PC-3 (cell line): ENCODE measurements at regions of chr2 and their contacts with region 1.

Region 1: DNA sequence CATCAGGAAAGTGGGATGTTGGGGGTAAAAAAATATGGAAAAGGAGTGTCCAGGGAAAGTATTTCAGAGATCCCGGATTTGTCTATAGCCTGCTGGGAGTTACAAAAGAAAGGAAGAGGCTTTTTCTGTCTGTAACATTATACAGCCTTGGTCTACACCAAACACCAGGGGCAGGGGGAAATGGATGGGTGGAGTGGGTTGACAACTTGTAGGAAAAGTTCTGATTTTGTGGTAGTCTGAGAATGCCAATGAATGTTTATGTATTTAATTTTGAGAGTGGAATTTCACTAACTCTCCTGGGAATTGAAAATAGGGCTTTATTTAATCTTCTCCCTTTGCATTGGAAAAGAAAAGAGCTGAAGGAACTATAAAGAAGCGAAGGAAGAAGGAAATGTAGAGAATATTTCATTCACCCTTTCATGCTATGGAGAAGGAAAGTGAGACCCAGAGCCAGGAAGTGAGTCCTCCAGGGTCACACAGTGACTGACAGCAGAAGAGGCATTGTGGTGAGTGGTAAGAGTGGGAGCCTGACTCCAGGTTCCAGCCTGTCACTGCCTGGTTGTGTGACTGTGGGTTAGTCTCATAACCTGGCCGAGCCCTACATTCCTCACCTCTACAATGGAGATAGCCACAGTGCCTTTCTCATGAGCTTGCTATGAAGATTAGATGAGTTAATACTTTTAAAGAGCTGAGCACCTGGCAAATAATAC is 346.3 kb upstream of the TNP1 start:
- DNase-seq: peak; percentile 14
- ATAC-seq: no peak
- H3K4me3 ChIP-seq: no peak overlapping the region
- H3K27ac ChIP-seq: no peak overlapping the region
- H3K4me1 ChIP-seq: no peaks in the 10 kb centered on the region
- H3K27me3 ChIP-seq: no peaks in the 10 kb centered on the region
- CTCF ChIP-seq: no peak

Region 2: DNA sequence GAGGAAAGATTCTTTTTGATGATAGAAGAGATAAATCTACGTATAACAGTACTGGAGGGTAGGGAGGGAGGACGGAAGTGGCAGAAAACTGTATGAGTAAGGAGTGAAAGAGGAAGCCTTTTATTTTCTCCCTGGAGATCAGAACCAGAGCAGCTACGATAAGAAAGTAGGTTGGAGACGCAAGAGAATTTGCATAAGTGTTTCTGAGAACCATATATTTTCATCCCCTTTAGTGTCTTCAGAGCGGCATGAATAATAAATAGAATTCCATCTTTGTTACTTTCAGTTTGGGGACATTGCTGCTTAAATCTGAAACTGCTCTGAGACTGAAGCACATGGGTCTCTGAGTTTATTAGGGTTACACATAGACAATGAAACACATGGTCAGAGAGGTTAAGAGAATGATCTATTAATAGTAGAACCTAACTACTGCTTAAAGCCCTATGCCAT is 116.1 kb before region 1 on chr2:
- CTCF ChIA-PET with region 1: no interaction called
- POLR2A ChIA-PET with region 1: no interaction called
- intact Hi-C with region 1: no loop called
- DNase-seq: no peak
- ATAC-seq: peak; percentile 51
- H3K4me3 ChIP-seq: peak overlapping the region; percentile 24; the same call in 1 of the 2 replicates
- H3K27ac ChIP-seq: no peak overlapping the region
- H3K4me1 ChIP-seq: peaks cover 8% of the 10 kb centered on the region; the same call in 1 of the 2 replicates
- H3K27me3 ChIP-seq: no peaks in the 10 kb centered on the region
- CTCF ChIP-seq: no peak

Region 3: DNA sequence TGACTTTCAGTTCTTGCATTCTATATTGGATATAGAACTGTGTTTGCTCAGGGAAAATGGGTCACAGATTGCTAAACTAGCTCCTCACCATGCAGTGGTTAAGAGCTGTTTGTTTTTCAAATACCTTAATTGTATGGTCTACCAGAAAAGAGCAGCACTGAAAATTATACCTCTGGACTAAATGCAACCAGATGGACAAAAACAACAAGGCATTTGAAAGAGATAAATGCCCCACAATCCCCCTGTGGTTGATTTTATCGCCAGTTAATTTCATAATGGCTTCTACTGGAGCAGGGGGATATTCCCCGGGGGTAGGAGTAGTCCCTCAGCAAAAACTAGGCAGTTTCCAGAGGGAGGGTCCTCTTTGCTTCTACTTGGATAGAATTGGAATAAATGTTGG is 78.4 kb before region 1 on chr2:
- CTCF ChIA-PET with region 1: no interaction called
- POLR2A ChIA-PET with region 1: no interaction called
- intact Hi-C with region 1: no loop called
- DNase-seq: no peak
- ATAC-seq: no peak
- H3K4me3 ChIP-seq: no peak overlapping the region
- H3K27ac ChIP-seq: no peak overlapping the region
- H3K4me1 ChIP-seq: no peaks in the 10 kb centered on the region
- H3K27me3 ChIP-seq: no peaks in the 10 kb centered on the region
- CTCF ChIP-seq: no peak

Region 4: DNA sequence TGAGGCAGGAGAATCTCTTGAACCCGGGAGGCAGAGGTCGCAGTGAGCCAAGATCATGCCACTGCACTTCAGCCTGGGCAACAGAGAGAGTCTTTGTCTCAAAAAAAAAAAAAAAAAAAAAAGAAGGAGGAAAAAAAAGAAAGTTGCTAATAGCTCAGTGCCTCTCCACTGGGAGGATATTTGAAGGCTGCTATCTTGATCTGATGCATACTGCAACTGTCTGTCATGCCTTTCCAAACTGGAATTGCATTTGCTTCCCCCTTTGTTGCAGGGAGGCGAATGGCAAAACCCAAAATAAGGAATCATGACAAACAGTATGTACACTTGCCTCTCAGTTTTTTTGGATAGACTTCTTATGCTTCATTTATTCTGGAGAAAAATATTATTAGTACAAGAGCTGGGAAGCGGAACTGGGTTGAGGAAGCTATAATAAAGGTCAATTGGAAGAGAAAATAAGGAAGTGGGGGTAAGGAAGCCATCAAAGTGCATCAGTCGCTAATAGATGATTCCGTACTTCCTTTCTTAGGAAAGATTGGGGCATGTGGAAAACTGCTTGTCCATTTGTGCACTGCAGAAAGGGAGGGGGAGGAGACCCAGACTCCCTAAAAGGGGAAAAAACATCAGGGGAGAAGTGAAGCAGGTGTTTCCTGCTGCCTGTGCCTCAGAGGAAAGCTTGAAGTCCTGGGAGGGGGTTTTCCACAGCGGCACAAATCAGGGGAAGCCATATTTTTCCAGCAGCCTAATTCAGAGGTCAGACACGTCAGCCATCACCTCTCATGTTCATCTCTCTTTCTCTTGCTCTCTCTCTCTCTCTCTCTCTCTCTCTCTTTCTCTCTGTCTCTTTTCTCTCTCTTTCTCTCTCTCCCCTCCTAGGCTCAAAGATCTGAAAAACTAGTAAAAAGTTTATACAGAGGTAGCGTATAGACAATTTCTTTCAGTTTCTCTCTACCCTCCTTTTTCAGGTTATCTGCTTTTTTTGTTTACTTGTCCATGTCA is 44.9 kb before region 1 on chr2:
- CTCF ChIA-PET with region 1: no interaction called
- POLR2A ChIA-PET with region 1: interaction called, 27 read pairs
- intact Hi-C with region 1: no loop called
- DNase-seq: peak; percentile 50
- ATAC-seq: no peak
- H3K4me3 ChIP-seq: no peak overlapping the region
- H3K27ac ChIP-seq: peak overlapping the region; percentile 91
- H3K4me1 ChIP-seq: peaks cover 35% of the 10 kb centered on the region
- H3K27me3 ChIP-seq: no peaks in the 10 kb centered on the region
- CTCF ChIP-seq: no peak